Activated naive CD8-positive, alpha-beta T cell treated with anti-CD3 and anti-CD28 coated beads, Interleukin-2, amount 10 ng/mL, durations not matched to agents 7 days and 5 days (primary cell): ENCODE measurements at regions of chr11 and their contacts with region 1.

Region 1: DNA sequence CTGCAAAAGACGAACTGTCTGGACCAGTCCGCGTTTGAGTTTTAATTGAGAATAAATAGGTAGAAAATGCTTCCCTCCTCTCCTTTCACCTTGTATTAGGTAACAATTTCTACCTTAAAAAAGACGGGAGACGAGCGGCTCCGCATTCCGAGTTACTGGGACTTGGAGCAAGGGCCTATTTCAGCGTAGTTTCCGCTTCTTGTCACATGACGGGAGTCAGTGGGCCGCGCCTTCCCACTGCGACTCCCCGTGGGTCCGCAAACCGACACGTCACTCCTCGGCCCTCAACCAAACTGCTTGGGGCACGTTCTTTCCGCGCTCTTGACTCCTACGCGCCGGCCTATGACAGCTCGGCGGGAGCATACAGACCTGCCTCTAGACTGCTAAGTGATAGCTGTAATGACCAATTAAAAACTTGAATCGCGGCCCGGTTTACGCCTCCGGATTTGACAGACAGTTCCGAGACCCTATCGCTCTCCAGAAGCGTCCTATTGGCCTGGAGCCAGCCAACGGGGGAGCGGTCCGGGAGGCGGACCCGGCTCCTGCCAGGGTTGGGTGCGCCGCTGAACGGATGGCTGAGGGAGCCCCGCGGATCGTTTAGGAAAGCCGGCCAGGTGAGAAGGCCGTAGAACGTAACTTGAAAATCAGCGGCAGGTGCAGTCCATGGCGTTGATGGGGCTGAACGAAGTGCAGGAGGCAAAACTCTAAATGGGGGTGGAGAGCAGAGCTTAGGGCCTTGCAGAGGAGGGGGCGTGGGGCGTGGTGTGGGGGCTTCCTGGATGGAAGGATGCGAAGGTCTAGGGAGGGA is at the start of gene STT3A:
- DNase-seq: peak; percentile 93
- ATAC-seq: peak; percentile 98
- H3K4me3 Mint-ChIP-seq: peak within 1 kb of the TSS; percentile 100
- H3K27ac Mint-ChIP-seq: peak within 1 kb of the TSS; percentile 94
- H3K4me1 Mint-ChIP-seq: peaks cover 36% of the 10 kb centered on the region
- H3K27me3 Mint-ChIP-seq: no peaks in the 10 kb centered on the region
- total RNA-seq, gene STT3A: 86.1 to 86.7 TPM

Region 2: GRCh38 chr11:125568970-125569914 is 23.3 kb before region 1 on chr11 and contains the start of gene EI24:
- POLR2A ChIA-PET with region 1: interaction called, 33 read pairs
- DNase-seq: peak; percentile 90
- ATAC-seq: peak; percentile 99
- H3K4me3 Mint-ChIP-seq: peak within 1 kb of the TSS; percentile 93
- H3K27ac Mint-ChIP-seq: peak within 1 kb of the TSS; percentile 92
- H3K4me1 Mint-ChIP-seq: peaks cover 28% of the 10 kb centered on the region
- H3K27me3 Mint-ChIP-seq: no peaks in the 10 kb centered on the region
- total RNA-seq, gene EI24: 39.0 to 39.2 TPM